ENCODE measurements at regions of chr10 and their contacts with region 1.

Region 1: GRCh38 chr10:117320050-117320665 is 55.1 kb downstream of the PDZD8 start:
- DNase-seq: peak; percentile 42
- ATAC-seq: peak; percentile 37; the same call in 1 of the 2 replicates
- H3K4me3 ChIP-seq: no peak overlapping the region
- H3K27ac ChIP-seq: no peak overlapping the region
- H3K4me1 ChIP-seq: 0 out of 2 replicates have a peak, but pooled peaks cover 4% of the 10 kb centered on the region
- H3K27me3 ChIP-seq: no peaks in the 10 kb centered on the region
- CTCF ChIP-seq: peak; percentile 74

Region 2: GRCh38 chr10:117216611-117217195 is 103.5 kb before region 1 on chr10:
- CTCF ChIA-PET with region 1: interaction called, 26 read pairs
- POLR2A ChIA-PET with region 1: no interaction called
- intact Hi-C with region 1: loop called (anchors 1 kb)
- DNase-seq: peak; percentile 60
- ATAC-seq: peak; percentile 60
- H3K4me3 ChIP-seq: peak overlapping the region; percentile 67
- H3K27ac ChIP-seq: no peak overlapping the region
- H3K4me1 ChIP-seq: peaks cover 10% of the 10 kb centered on the region
- H3K27me3 ChIP-seq: no peaks in the 10 kb centered on the region
- CTCF ChIP-seq: peak; percentile 96

Measured in PC-3 (cell line).